ENCODE measurements at regions of chr9 and their contacts with region 1.

Region 1: GRCh38 chr9:38651400-38652042 is 31.1 kb upstream of the ANKRD18A start:
- DNase-seq: no peak
- H3K4me3 ChIP-seq: no peak overlapping the region
- H3K27ac ChIP-seq: no peak overlapping the region
- H3K4me1 ChIP-seq: no peaks in the 10 kb centered on the region
- H3K27me3 ChIP-seq: no peaks in the 10 kb centered on the region
- CTCF ChIP-seq: no peak
- EP300 ChIP-seq: no peak
- POLR2A ChIP-seq: no peak

Region 2: GRCh38 chr9:38687387-38687842 is 35.9 kb after region 1 on chr9:
- intact Hi-C with region 1: no loop called
- DNase-seq: peak in 3 of 5 donors; percentile 20 to 42 (median 21)
- H3K4me3 ChIP-seq: no peak overlapping the region
- H3K27ac ChIP-seq: no peak overlapping the region
- H3K4me1 ChIP-seq: peaks cover 8% of the 10 kb centered on the region
- H3K27me3 ChIP-seq: no peaks in the 10 kb centered on the region
- CTCF ChIP-seq: no peak
- EP300 ChIP-seq: no peak
- POLR2A ChIP-seq: no peak

Region 3: DNA sequence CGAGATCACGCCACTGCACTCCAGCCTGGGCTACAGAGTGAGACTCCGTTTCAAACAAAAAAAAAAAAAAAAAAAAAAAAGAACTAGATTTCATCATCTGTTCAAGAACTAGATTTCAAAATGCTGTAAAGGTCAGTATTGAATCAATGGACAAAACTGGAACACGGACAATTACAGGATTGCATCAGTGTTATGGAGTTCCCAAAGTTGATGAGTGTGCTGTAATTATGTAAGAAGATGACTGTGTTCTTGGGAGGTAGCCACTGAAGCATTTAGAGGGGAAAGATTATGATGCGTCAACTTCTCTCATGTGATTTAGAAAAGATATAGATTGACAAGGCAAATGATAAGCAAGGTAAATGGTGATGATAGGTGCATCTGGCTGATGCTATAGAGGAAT is 61.9 kb after region 1 on chr9:
- intact Hi-C with region 1: loop called in 1 of 4 experiments (anchors 10 kb)
- DNase-seq: no peak
- H3K4me3 ChIP-seq: no peak overlapping the region
- H3K27ac ChIP-seq: no peak overlapping the region
- H3K4me1 ChIP-seq: no peaks in the 10 kb centered on the region
- H3K27me3 ChIP-seq: no peaks in the 10 kb centered on the region
- CTCF ChIP-seq: no peak
- EP300 ChIP-seq: no peak
- POLR2A ChIP-seq: no peak

Measured in ovary (tissue), 10 donors.